ENCODE measurements at regions of chr4 and their contacts with region 1.

Region 1: GRCh38 chr4:124953061-124953460 is 240.5 kb upstream of the ANKRD50 start:
- DNase-seq: peak; percentile 65
- H3K4me3 ChIP-seq: no peak overlapping the region
- H3K27ac ChIP-seq: no peak overlapping the region
- H3K4me1 ChIP-seq: peaks cover 6% of the 10 kb centered on the region
- H3K27me3 ChIP-seq: no peaks in the 10 kb centered on the region
- CTCF ChIP-seq: no peak

Region 2: GRCh38 chr4:125020089-125021034 is 67.3 kb after region 1 on chr4:
- CTCF ChIA-PET with region 1: no interaction called
- POLR2A ChIA-PET with region 1: no interaction called
- intact Hi-C with region 1: loop called (anchors 1 kb)
- DNase-seq: no peak
- H3K4me3 ChIP-seq: no peak overlapping the region
- H3K27ac ChIP-seq: no peak overlapping the region
- H3K4me1 ChIP-seq: no peaks in the 10 kb centered on the region
- H3K27me3 ChIP-seq: no peaks in the 10 kb centered on the region
- CTCF ChIP-seq: no peak